B cell (primary cell): ENCODE measurements at regions of chr7 and their contacts with region 1.

Region 1: GRCh38 chr7:27196287-27196767 is 3.6 kb downstream of the HOXA13 start:
- DNase-seq: peak; percentile 84
- ATAC-seq: no peak
- H3K4me3 ChIP-seq: no peak overlapping the region
- H3K4me3 Mint-ChIP-seq: no peak overlapping the region
- H3K27ac ChIP-seq: no peak overlapping the region
- H3K27ac Mint-ChIP-seq: peak overlapping the region; percentile 64
- H3K4me1 ChIP-seq: peaks cover 44 to 64% of the 10 kb centered on the region in 2 donors
- H3K4me1 Mint-ChIP-seq: peaks cover 34% of the 10 kb centered on the region
- H3K27me3 ChIP-seq: peaks cover 3 to 82% (median 76%) of the 10 kb centered on the region in 4 experiments
- H3K27me3 Mint-ChIP-seq: peaks cover 79% of the 10 kb centered on the region
- CTCF ChIP-seq: peak; percentile 96

Region 2: GRCh38 chr7:27160546-27161213 is 35.6 kb before region 1 on chr7:
- CTCF ChIA-PET with region 1: interaction called, 28 read pairs
- POLR2A ChIA-PET with region 1: interaction called, 4 read pairs
- intact Hi-C with region 1: loop called (anchors 2 kb)
- DNase-seq: peak; percentile 91
- ATAC-seq: peak; percentile 84
- H3K4me3 ChIP-seq: peak overlapping the region; percentile 24 to 76 (median 62)
- H3K4me3 Mint-ChIP-seq: peak overlapping the region; percentile 86
- H3K27ac ChIP-seq: no peak overlapping the region
- H3K27ac Mint-ChIP-seq: peak overlapping the region; percentile 67
- H3K4me1 ChIP-seq: peaks cover 49 to 57% of the 10 kb centered on the region in 2 donors
- H3K4me1 Mint-ChIP-seq: peaks cover 38% of the 10 kb centered on the region
- H3K27me3 ChIP-seq: peaks cover 1 to 88% (median 75%) of the 10 kb centered on the region in 4 experiments
- H3K27me3 Mint-ChIP-seq: peaks cover 70% of the 10 kb centered on the region
- CTCF ChIP-seq: peak; percentile 100

Region 3: GRCh38 chr7:27210441-27211083 is 14.2 kb after region 1 on chr7:
- CTCF ChIA-PET with region 1: interaction called, 28 read pairs
- POLR2A ChIA-PET with region 1: no interaction called
- intact Hi-C with region 1: no loop called
- DNase-seq: peak; percentile 70
- ATAC-seq: peak; percentile 73
- H3K4me3 ChIP-seq: peak overlapping the region in 3 of 5 experiments; percentile 17 to 24 (median 20)
- H3K4me3 Mint-ChIP-seq: peak overlapping the region; percentile 51
- H3K27ac ChIP-seq: no peak overlapping the region
- H3K27ac Mint-ChIP-seq: no peak overlapping the region
- H3K4me1 ChIP-seq: peaks cover 21 to 31% of the 10 kb centered on the region in 2 donors
- H3K4me1 Mint-ChIP-seq: peaks cover 21% of the 10 kb centered on the region
- H3K27me3 ChIP-seq: peaks cover 0 to 95% (median 82%) of the 10 kb centered on the region in 4 experiments
- H3K27me3 Mint-ChIP-seq: peaks cover 86% of the 10 kb centered on the region
- CTCF ChIP-seq: peak; percentile 84

Region 4: DNA sequence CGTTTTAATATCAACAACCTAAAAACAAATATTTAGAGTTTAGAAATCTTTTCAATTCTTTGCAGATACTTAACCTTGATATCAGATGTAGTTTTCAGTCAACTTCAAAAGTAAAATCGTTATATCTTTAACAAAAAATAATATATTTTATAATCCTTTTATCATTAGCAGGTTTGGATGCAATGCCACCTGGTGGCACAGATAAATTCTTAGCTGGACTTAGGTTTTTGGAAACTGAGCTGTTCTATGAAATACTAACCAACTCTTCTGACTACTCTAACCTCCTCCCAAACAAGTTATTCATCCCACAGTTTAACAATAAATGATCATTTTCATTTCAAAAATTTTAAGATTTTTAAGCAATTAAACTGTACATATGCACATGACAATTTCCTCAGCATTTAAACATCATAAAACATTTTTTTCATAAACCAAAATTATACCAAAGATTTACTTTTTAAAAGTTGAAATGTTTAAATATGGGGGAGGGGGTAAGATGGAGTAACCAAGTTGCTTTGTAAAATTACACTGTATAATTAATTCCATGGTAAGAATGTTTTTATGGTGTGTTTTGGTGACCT is 409.5 kb after region 1 on chr7:
- CTCF ChIA-PET with region 1: interaction called, 7 read pairs
- POLR2A ChIA-PET with region 1: no interaction called
- intact Hi-C with region 1: loop called (anchors 10 kb)
- DNase-seq: no peak
- ATAC-seq: no peak
- H3K4me3 ChIP-seq: no peak overlapping the region
- H3K4me3 Mint-ChIP-seq: no peak overlapping the region
- H3K27ac ChIP-seq: no peak overlapping the region
- H3K27ac Mint-ChIP-seq: no peak overlapping the region
- H3K4me1 ChIP-seq: no peaks in the 10 kb centered on the region
- H3K4me1 Mint-ChIP-seq: no peaks in the 10 kb centered on the region
- H3K27me3 ChIP-seq: no peaks in the 10 kb centered on the region
- H3K27me3 Mint-ChIP-seq: no peaks in the 10 kb centered on the region
- CTCF ChIP-seq: no peak

Region 5: DNA sequence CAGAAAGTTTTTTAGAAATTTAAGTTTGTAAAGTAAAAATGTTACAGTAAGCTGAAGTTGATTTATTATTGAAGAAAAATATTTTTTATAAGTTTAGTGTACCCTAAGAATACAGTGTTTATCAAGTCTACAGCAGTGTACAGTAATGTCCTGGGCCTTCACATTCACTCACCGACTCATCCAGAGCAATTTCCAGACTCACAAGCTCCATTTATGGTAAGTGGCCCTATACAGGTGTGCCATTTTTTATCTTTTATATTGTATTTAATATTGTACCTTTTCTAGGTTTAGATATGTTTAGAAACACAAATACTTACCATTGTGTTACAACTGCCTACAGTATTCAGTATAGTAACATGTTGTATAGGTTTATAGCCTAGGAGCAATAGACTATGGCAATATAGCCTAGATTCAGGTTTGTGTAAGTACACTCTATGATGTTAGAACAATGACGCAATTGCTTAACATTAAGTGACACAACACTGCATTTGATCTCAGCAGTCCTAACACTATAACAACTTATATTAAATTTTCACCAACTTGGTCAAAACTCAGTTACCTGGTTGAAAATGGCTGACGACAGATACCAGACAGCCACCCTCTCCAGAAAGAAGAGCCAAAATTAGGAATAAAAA is 420.7 kb after region 1 on chr7:
- CTCF ChIA-PET with region 1: no interaction called
- POLR2A ChIA-PET with region 1: no interaction called
- intact Hi-C with region 1: no loop called
- DNase-seq: no peak
- ATAC-seq: no peak
- H3K4me3 ChIP-seq: no peak overlapping the region
- H3K4me3 Mint-ChIP-seq: no peak overlapping the region
- H3K27ac ChIP-seq: no peak overlapping the region
- H3K27ac Mint-ChIP-seq: no peak overlapping the region
- H3K4me1 ChIP-seq: no peaks in the 10 kb centered on the region
- H3K4me1 Mint-ChIP-seq: peaks cover 4% of the 10 kb centered on the region
- H3K27me3 ChIP-seq: no peaks in the 10 kb centered on the region
- H3K27me3 Mint-ChIP-seq: no peaks in the 10 kb centered on the region
- CTCF ChIP-seq: no peak

Region 6: GRCh38 chr7:27921081-27921836 is 724.9 kb after region 1 on chr7:
- CTCF ChIA-PET with region 1: interaction called, 51 read pairs
- POLR2A ChIA-PET with region 1: no interaction called
- intact Hi-C with region 1: loop called (anchors 1 kb)
- DNase-seq: peak; percentile 68
- ATAC-seq: peak; percentile 60
- H3K4me3 ChIP-seq: no peak overlapping the region
- H3K4me3 Mint-ChIP-seq: no peak overlapping the region
- H3K27ac ChIP-seq: no peak overlapping the region
- H3K27ac Mint-ChIP-seq: no peak overlapping the region
- H3K4me1 ChIP-seq: peaks cover 35 to 39% of the 10 kb centered on the region in 2 donors
- H3K4me1 Mint-ChIP-seq: peaks cover 67% of the 10 kb centered on the region
- H3K27me3 ChIP-seq: no peaks in the 10 kb centered on the region
- H3K27me3 Mint-ChIP-seq: no peaks in the 10 kb centered on the region
- CTCF ChIP-seq: peak; percentile 71

Region 7: DNA sequence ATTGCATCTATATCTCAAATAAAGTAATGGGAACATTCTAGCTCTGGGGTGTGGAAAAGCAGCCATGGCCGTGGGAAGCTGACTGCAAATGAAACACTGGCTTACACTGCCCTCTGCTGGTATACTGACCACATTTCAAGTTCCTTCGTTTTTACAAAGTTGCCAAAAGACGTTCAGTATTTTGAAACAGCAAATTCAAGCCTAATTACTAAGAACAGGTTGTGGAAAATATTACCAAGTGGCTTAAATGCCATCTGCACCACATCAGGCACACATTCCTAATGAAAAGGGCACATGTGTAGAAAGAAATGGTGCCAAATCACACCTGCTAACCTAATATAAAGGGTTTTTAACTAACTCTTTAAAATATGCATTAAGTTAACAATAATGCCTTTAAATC is 900.4 kb after region 1 on chr7:
- CTCF ChIA-PET with region 1: interaction called, 21 read pairs
- POLR2A ChIA-PET with region 1: no interaction called
- intact Hi-C with region 1: loop called (anchors 1 kb)
- DNase-seq: peak; percentile 69
- ATAC-seq: peak; percentile 68
- H3K4me3 ChIP-seq: no peak overlapping the region
- H3K4me3 Mint-ChIP-seq: no peak overlapping the region
- H3K27ac ChIP-seq: no peak overlapping the region
- H3K27ac Mint-ChIP-seq: no peak overlapping the region
- H3K4me1 ChIP-seq: peaks cover 13 to 14% of the 10 kb centered on the region in 2 donors
- H3K4me1 Mint-ChIP-seq: peaks cover 38% of the 10 kb centered on the region
- H3K27me3 ChIP-seq: no peaks in the 10 kb centered on the region
- H3K27me3 Mint-ChIP-seq: no peaks in the 10 kb centered on the region
- CTCF ChIP-seq: peak; percentile 99